Mucosa of descending colon (tissue), 3 donors: ENCODE measurements at regions of chr14 and their contacts with region 1.

Region 1: DNA sequence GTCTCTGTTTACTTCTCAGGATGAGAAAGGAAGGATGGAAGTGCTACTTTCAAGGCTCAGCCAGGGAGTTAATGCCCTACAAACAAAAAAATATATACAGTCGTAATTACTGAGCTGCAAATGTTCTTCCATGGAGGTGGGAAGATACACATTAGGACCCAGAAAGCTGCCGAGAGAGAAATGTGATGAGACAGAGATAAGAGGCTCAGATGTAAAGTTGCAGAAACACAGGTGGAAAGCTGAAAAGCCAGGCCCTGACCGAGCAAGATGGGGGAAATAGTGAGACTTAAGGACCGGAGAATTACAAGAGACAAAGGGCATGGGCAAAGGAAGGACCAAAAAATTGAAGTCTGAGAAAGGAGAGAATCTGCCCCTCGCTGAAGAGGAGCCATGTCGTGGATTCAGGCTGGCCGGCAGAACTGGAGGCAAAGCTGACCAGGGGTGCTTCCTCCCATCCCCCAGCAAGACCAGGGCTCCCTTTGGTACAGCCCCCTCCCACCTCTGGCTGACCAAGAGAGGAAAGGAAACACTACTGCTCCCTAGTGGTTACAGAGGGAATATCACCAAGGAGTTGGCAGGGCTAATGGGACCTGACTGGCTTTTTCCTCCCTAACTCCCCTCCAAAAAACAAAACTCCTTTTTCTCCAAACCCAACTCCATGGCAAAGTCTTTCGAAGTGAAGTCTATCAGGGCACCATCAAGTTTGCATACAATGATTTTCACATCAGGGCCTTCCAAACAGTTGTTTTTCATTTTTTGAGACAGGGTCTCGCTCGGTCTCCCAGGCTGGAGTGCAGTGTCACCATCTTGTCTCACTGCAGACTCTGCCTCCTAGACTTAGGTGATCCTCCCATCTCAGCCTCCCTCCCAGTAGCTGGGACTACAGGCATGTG is 12.1 kb downstream of the ZFHX2 start:
- DNase-seq: peak in 1 of 3 donors; percentile 40
- ATAC-seq: peak; percentile 70
- H3K4me3 ChIP-seq: no peak overlapping the region
- H3K4me1 ChIP-seq: no peaks in the 10 kb centered on the region
- CTCF ChIP-seq: peak; percentile 65

Region 2: GRCh38 chr14:23237772-23238594 is 301.5 kb before region 1 on chr14 and contains the start of gene RNF212B:
- intact Hi-C with region 1: no loop called
- DNase-seq: peak; percentile 92 to 98 (median 96)
- ATAC-seq: peak; percentile 100
- H3K4me3 ChIP-seq: no peak within 1 kb of the TSS
- H3K4me1 ChIP-seq: no peaks in the 10 kb centered on the region
- CTCF ChIP-seq: no peak
- total RNA-seq, gene RNF212B: not detected

Region 3: DNA sequence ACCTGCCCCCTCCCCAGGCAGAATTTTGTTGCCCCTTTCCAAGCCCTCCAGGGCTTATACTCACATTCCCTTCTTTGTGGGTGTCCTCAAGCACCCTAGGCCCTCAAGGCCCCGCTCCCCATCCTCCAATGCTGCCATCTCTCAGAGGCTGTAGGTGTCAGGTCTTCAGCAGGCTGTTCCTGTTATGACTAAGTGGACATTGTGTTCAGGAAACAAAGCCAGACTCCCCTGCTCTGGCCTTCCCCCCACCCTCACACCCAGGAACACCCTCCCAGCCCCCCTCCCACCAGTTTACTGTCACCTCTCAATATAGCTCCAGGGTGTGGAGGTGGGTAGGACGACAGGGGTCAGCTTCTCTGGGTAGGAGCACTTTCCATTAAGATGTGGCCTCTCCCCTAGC is 130.0 kb before region 1 on chr14:
- intact Hi-C with region 1: no loop called
- DNase-seq: no peak
- ATAC-seq: no peak
- H3K4me3 ChIP-seq: no peak overlapping the region
- H3K4me1 ChIP-seq: no peaks in the 10 kb centered on the region
- CTCF ChIP-seq: no peak

Region 4: GRCh38 chr14:23483236-23483854 is 56.1 kb before region 1 on chr14:
- intact Hi-C with region 1: loop called in 1 of 2 experiments (anchors 10 kb)
- DNase-seq: no peak
- ATAC-seq: no peak
- H3K4me3 ChIP-seq: no peak overlapping the region
- H3K4me1 ChIP-seq: no peaks in the 10 kb centered on the region
- CTCF ChIP-seq: no peak